Sigmoid colon (tissue), 7 donors: ENCODE measurements at regions of chr9 and their contacts with region 1.

Region 1: DNA sequence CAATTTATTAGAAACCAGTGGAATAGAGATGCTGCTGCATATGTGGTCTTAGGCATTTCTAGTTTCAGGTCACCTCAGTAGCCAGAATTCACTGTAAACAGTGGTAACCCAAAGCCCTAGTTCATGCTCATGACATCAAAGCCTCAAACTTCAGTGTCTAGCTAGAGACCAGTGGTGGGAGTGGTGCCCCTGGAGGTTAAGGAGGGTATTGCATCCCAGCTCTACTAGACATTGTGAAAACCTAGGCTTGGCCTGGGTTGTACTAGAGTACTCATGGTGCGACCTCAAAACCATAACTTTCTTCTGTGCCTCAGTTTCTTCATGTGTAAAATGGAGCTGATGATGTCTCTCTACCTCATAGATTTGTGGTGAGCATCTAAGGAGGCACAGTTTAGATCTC is 18.8 kb downstream of the COL5A1 start:
- DNase-seq: peak; percentile 53
- H3K4me3 ChIP-seq: no peak overlapping the region
- H3K27ac ChIP-seq: peak overlapping the region; percentile 79 to 92 (median 90)
- H3K4me1 ChIP-seq: peaks cover 0 to 93% (median 88%) of the 10 kb centered on the region in 4 donors
- H3K27me3 ChIP-seq: no peaks in the 10 kb centered on the region
- CTCF ChIP-seq: peak in 3 of 4 experiments; percentile 26 to 61 (median 42)
- EP300 ChIP-seq: no peak
- POLR2A ChIP-seq: no peak

Region 2: DNA sequence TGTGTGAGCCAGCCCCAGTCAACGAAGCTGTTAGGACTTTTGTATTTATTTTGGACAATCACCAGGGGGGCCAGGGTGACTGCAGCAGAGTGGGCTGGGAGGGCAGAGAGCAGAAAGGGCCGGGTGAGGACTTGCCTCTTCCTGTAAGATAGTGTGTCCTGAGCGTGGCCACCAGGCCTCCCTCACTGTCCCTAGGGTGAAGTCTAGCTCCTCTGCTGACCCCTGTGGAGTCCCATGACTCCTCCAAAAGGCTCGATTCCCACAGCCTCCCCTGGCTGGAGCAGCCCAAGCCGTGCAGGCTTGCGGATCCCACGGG is 186.4 kb before region 1 on chr9:
- intact Hi-C with region 1: loop called (anchors 5 kb)
- DNase-seq: no peak
- H3K4me3 ChIP-seq: no peak overlapping the region
- H3K27ac ChIP-seq: peak overlapping the region; percentile 64 to 70 (median 68)
- H3K4me1 ChIP-seq: peaks cover 0 to 57% (median 39%) of the 10 kb centered on the region in 4 donors
- H3K27me3 ChIP-seq: no peaks in the 10 kb centered on the region
- CTCF ChIP-seq: no peak
- EP300 ChIP-seq: no peak
- POLR2A ChIP-seq: no peak

Region 3: GRCh38 chr9:134785325-134786108 is 125.1 kb after region 1 on chr9:
- intact Hi-C with region 1: no loop called
- DNase-seq: no peak
- H3K4me3 ChIP-seq: no peak overlapping the region
- H3K27ac ChIP-seq: peak overlapping the region in 2 of 4 donors; percentile 5 to 31
- H3K4me1 ChIP-seq: peaks cover 0 to 10% (median 5%) of the 10 kb centered on the region in 4 donors
- H3K27me3 ChIP-seq: no peaks in the 10 kb centered on the region
- CTCF ChIP-seq: no peak
- EP300 ChIP-seq: no peak
- POLR2A ChIP-seq: no peak